Right cardiac atrium (tissue), 5 donors: ENCODE measurements at regions of chr15 and their contacts with region 1.

Region 1: GRCh38 chr15:57561041-57561711 is 30.5 kb upstream of the MYZAP start:
- DNase-seq: peak; percentile 68 to 84 (median 78)
- ATAC-seq: peak; percentile 90 to 91
- H3K4me3 ChIP-seq: no peak overlapping the region
- H3K27ac ChIP-seq: peak overlapping the region; percentile 80
- H3K4me1 ChIP-seq: peaks cover 2% of the 10 kb centered on the region
- H3K27me3 ChIP-seq: no peaks in the 10 kb centered on the region

Region 2: DNA sequence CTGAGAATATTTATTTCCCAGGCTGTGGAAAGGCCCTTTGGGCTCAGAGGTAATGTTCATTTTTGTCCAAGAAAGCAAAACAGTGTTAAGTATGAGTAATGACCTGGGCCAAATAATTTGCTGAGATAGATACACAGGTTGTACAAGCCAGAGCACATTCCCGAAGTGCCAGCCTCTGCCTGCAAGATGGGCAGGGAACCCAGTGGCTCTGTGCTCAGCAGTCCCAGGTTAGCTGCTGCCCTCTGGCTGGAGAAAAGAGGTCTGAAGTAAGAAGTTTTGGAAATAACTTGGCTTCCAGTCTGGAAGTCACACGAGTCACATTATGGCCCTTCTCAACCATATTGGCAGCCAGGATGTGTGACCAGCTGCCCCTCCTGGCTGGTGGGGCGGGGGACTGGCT is 50.8 kb after region 1 on chr15:
- intact Hi-C with region 1: loop called in 2 of 4 experiments (anchors 5 to 10 kb)
- DNase-seq: peak in 2 of 3 donors; percentile 63 to 76
- ATAC-seq: peak; percentile 42 to 61
- H3K4me3 ChIP-seq: no peak overlapping the region
- H3K27ac ChIP-seq: peak overlapping the region; percentile 74
- H3K4me1 ChIP-seq: peaks cover 11% of the 10 kb centered on the region
- H3K27me3 ChIP-seq: no peaks in the 10 kb centered on the region

Region 3: GRCh38 chr15:57619746-57620145 is 58.6 kb after region 1 on chr15:
- intact Hi-C with region 1: loop called in 3 of 4 experiments (anchors 5 to 10 kb)
- DNase-seq: peak in 1 of 3 donors; percentile 59
- ATAC-seq: peak; percentile 56 to 63
- H3K4me3 ChIP-seq: no peak overlapping the region
- H3K27ac ChIP-seq: no peak overlapping the region
- H3K4me1 ChIP-seq: peaks cover 3% of the 10 kb centered on the region
- H3K27me3 ChIP-seq: no peaks in the 10 kb centered on the region

Region 4: GRCh38 chr15:57635300-57635909 is 74.2 kb after region 1 on chr15:
- intact Hi-C with region 1: no loop called
- DNase-seq: peak in 1 of 3 donors; percentile 66
- ATAC-seq: peak; percentile 83 to 87
- H3K4me3 ChIP-seq: no peak overlapping the region
- H3K27ac ChIP-seq: peak overlapping the region; percentile 94
- H3K4me1 ChIP-seq: peaks cover 6% of the 10 kb centered on the region
- H3K27me3 ChIP-seq: no peaks in the 10 kb centered on the region

Region 5: GRCh38 chr15:57706405-57707209 is 145.4 kb after region 1 on chr15 and contains the start of gene POLR2M:
- intact Hi-C with region 1: loop called in 2 of 4 experiments (anchors 5 to 10 kb)
- DNase-seq: peak; percentile 97 to 98 (median 97)
- ATAC-seq: peak; percentile 94 to 95
- H3K4me3 ChIP-seq: peak within 1 kb of the TSS; percentile 81
- H3K27ac ChIP-seq: peak within 1 kb of the TSS; percentile 92
- H3K4me1 ChIP-seq: no peaks in the 10 kb centered on the region
- H3K27me3 ChIP-seq: no peaks in the 10 kb centered on the region
- total RNA-seq, gene POLR2M: 51.3 to 57.8 (median 56.1) TPM